ENCODE measurements at regions of chr19 and their contacts with region 1.

Region 1: DNA sequence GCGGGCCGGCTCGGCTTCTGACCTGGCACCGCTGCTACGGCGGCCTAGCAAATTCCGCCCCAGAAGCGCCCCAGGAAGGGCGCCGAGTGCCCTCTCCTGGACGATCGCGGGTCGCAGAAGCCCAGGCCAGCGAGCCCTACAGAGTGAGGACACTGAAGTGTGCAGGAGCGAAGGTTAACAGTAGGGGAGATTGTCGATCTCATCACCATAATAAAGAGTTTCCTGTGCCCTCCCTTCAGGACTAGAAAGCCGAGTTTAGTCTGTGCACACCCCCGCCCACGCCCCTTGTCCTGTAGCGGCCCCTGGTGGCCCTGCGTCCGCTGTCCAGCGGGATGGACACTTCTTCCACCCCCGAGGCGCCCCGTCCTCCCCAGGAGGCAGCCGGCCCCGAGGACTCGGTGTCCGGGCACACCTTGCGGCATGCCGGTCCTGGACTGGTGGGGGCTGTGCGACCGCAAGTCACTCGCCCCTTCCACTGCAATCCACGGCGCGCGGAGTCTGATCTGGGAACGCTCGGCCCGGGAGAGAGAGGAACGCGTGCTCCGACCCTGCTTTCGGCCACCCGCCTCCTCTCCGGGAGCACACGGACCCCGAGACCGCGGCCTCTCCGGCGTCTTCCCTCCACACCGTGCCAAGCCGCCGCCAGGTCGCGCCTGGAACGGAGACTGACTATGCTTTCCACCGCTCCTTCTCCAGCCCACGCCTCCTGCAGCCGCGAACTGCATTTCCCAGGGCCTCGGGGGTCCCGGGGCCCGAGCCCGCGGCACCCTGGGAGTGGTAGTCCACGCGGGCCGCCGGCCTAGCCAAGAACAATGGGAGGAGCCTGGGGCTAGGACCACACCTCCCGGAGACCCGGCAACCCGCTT is 769 bp upstream of the KMT2B start:
- DNase-seq: peak; percentile 94
- ATAC-seq: peak; percentile 87
- H3K4me3 ChIP-seq: peak overlapping the region; percentile 72
- H3K27ac ChIP-seq: peak overlapping the region; percentile 62
- H3K4me1 ChIP-seq: peaks cover 14% of the 10 kb centered on the region
- H3K27me3 ChIP-seq: no peaks in the 10 kb centered on the region
- CTCF ChIP-seq: peak; percentile 81
- POLR2A ChIP-seq: no peak
- RAD21 ChIP-seq: peak; percentile 71

Region 2: DNA sequence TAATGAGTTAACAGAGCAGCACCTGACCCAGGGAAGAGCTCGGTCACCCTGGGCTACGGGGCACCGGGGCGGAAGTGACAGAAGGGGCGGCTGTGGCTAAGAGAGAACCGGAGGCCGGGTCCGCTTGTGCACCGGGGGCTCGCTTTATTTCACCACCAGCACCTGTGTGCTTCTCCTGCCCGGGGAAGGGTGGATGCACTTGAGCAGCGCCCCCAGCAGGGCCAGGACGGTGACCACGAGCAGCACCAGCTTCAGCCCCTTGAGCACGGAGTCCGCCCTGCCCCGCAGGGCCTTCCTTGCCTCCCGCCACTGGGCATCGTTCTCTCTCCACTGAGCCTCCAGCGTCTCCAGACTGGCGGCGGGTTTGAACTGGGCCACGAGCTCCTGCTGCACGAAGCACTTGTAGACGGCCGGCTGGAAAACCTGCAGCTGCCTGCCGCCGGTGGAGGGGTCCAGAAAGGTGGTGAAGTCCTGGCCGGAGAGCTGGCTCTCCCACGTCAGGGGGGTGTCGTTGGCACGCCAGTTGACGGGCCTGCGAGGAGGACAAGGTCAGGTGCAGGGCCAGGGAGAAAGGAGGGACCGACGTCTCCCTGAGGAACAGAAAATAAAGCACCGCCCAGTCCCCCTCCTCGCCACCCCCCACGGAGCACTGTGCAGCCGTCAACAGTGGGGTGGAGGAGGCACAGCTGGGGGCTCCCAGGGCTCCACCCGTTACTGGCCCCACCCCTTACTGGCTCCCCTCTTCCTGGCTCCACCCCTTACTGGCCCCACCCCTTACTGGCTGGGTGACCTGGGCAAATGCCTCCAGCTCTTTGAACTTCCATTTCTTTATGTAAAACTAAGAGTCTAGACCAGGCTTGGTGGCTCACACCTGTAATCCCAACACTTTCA is 492.1 kb before region 1 on chr19:
- CTCF ChIA-PET with region 1: no interaction called
- POLR2A ChIA-PET with region 1: no interaction called
- dilution Hi-C with region 1: no loop called
- in situ Hi-C with region 1: no loop called
- intact Hi-C with region 1: no loop called
- DNase-seq: no peak
- ATAC-seq: no peak
- H3K4me3 ChIP-seq: no peak overlapping the region
- H3K27ac ChIP-seq: no peak overlapping the region
- H3K4me1 ChIP-seq: no peaks in the 10 kb centered on the region
- H3K27me3 ChIP-seq: peaks cover 13% of the 10 kb centered on the region
- CTCF ChIP-seq: no peak
- POLR2A ChIP-seq: no peak
- RAD21 ChIP-seq: no peak

Region 3: GRCh38 chr19:35545001-35545911 is 171.8 kb before region 1 on chr19 and contains the start of gene TMEM147:
- CTCF ChIA-PET with region 1: no interaction called
- POLR2A ChIA-PET with region 1: no interaction called
- dilution Hi-C with region 1: no loop called
- in situ Hi-C with region 1: loop called (anchors 5 kb)
- intact Hi-C with region 1: loop called (anchors 1 kb)
- DNase-seq: peak; percentile 85
- ATAC-seq: peak; percentile 96
- H3K4me3 ChIP-seq: peak within 1 kb of the TSS; percentile 91
- H3K27ac ChIP-seq: peak within 1 kb of the TSS; percentile 90
- H3K4me1 ChIP-seq: peaks cover 8% of the 10 kb centered on the region
- H3K27me3 ChIP-seq: no peaks in the 10 kb centered on the region
- CTCF ChIP-seq: no peak
- POLR2A ChIP-seq: peak; percentile 90
- RAD21 ChIP-seq: no peak
- total RNA-seq, gene TMEM147: 59.2 and 67.6 TPM in 2 replicates

Region 4: GRCh38 chr19:35644206-35644986 is 72.6 kb before region 1 on chr19:
- CTCF ChIA-PET with region 1: no interaction called
- POLR2A ChIA-PET with region 1: no interaction called
- dilution Hi-C with region 1: no loop called
- in situ Hi-C with region 1: no loop called
- intact Hi-C with region 1: loop called (anchors 2 kb)
- DNase-seq: peak; percentile 88
- ATAC-seq: peak; percentile 79
- H3K4me3 ChIP-seq: peak overlapping the region; percentile 67
- H3K27ac ChIP-seq: peak overlapping the region; percentile 38
- H3K4me1 ChIP-seq: peaks cover 11% of the 10 kb centered on the region
- H3K27me3 ChIP-seq: no peaks in the 10 kb centered on the region
- CTCF ChIP-seq: no peak
- POLR2A ChIP-seq: no peak
- RAD21 ChIP-seq: no peak

Region 5: GRCh38 chr19:35666246-35666913 is 50.7 kb before region 1 on chr19 and contains the start of gene UPK1A:
- CTCF ChIA-PET with region 1: no interaction called
- POLR2A ChIA-PET with region 1: no interaction called
- dilution Hi-C with region 1: no loop called
- in situ Hi-C with region 1: no loop called
- intact Hi-C with region 1: no loop called
- DNase-seq: no peak
- ATAC-seq: peak; percentile 28; the same call in 1 of the 2 replicates
- H3K4me3 ChIP-seq: no peak within 1 kb of the TSS
- H3K27ac ChIP-seq: no peak within 1 kb of the TSS
- H3K4me1 ChIP-seq: no peaks in the 10 kb centered on the region
- H3K27me3 ChIP-seq: peaks cover 5% of the 10 kb centered on the region; the same call in 1 of the 2 replicates
- CTCF ChIP-seq: no peak
- POLR2A ChIP-seq: no peak
- RAD21 ChIP-seq: no peak
- total RNA-seq, gene UPK1A: not detected in 2 replicates

Region 6: GRCh38 chr19:35693830-35694599 is 23.0 kb before region 1 on chr19:
- CTCF ChIA-PET with region 1: no interaction called
- POLR2A ChIA-PET with region 1: no interaction called
- dilution Hi-C with region 1: no loop called
- in situ Hi-C with region 1: no loop called
- intact Hi-C with region 1: loop called (anchors 1 kb)
- DNase-seq: peak; percentile 76
- ATAC-seq: peak; percentile 99
- H3K4me3 ChIP-seq: no peak overlapping the region
- H3K27ac ChIP-seq: no peak overlapping the region
- H3K4me1 ChIP-seq: peaks cover 3% of the 10 kb centered on the region; the same call in 1 of the 2 replicates
- H3K27me3 ChIP-seq: peaks cover 2% of the 10 kb centered on the region; the same call in 1 of the 2 replicates
- CTCF ChIP-seq: peak; percentile 99
- POLR2A ChIP-seq: no peak
- RAD21 ChIP-seq: peak; percentile 93

Region 7: GRCh38 chr19:35745328-35746086 is 28.5 kb after region 1 on chr19 and contains the starts of genes PSENEN and U2AF1L4:
- CTCF ChIA-PET with region 1: no interaction called
- POLR2A ChIA-PET with region 1: no interaction called
- dilution Hi-C with region 1: no loop called
- in situ Hi-C with region 1: no loop called
- intact Hi-C with region 1: loop called (anchors 2 kb)
- DNase-seq: peak; percentile 100
- ATAC-seq: peak; percentile 71
- H3K4me3 ChIP-seq: peak within 1 kb of the TSS; percentile 56
- H3K27ac ChIP-seq: peak within 1 kb of the TSS; percentile 69
- H3K4me1 ChIP-seq: peaks cover 4% of the 10 kb centered on the region; the same call in 1 of the 2 replicates
- H3K27me3 ChIP-seq: no peaks in the 10 kb centered on the region
- CTCF ChIP-seq: 0 out of 2 replicates have a peak, but pooled peaks have one; percentile 11
- POLR2A ChIP-seq: no peak; the same call in 1 of the 2 replicates
- RAD21 ChIP-seq: no peak
- total RNA-seq, gene PSENEN: 8.6 and 9.0 TPM in 2 replicates
- total RNA-seq, gene U2AF1L4: 6.1 and 8.1 TPM in 2 replicates

Region 8: GRCh38 chr19:35812220-35813042 is 95.4 kb after region 1 on chr19 and contains the start of gene PRODH2:
- CTCF ChIA-PET with region 1: no interaction called
- POLR2A ChIA-PET with region 1: no interaction called
- dilution Hi-C with region 1: no loop called
- in situ Hi-C with region 1: no loop called
- intact Hi-C with region 1: no loop called
- DNase-seq: no peak
- ATAC-seq: no peak
- H3K4me3 ChIP-seq: no peak within 1 kb of the TSS
- H3K27ac ChIP-seq: no peak within 1 kb of the TSS
- H3K4me1 ChIP-seq: no peaks in the 10 kb centered on the region
- H3K27me3 ChIP-seq: peaks cover 27% of the 10 kb centered on the region
- CTCF ChIP-seq: no peak
- POLR2A ChIP-seq: no peak
- RAD21 ChIP-seq: no peak
- total RNA-seq, gene PRODH2: not detected in 2 replicates

Region 9: GRCh38 chr19:36014029-36014924 is 297.2 kb after region 1 on chr19 and contains the start of gene ALKBH6:
- CTCF ChIA-PET with region 1: no interaction called
- POLR2A ChIA-PET with region 1: no interaction called
- dilution Hi-C with region 1: no loop called
- in situ Hi-C with region 1: no loop called
- intact Hi-C with region 1: no loop called
- DNase-seq: peak; percentile 97
- ATAC-seq: peak; percentile 98
- H3K4me3 ChIP-seq: peak within 1 kb of the TSS; percentile 88
- H3K27ac ChIP-seq: peak within 1 kb of the TSS; percentile 73
- H3K4me1 ChIP-seq: peaks cover 7% of the 10 kb centered on the region; the same call in 1 of the 2 replicates
- H3K27me3 ChIP-seq: no peaks in the 10 kb centered on the region
- CTCF ChIP-seq: no peak
- POLR2A ChIP-seq: peak; percentile 53; the same call in 1 of the 2 replicates
- RAD21 ChIP-seq: no peak
- total RNA-seq, gene ALKBH6: 10.3 and 12.9 TPM in 2 replicates

Measured in IMR-90 (cell line).